ENCODE measurements at regions of chr1 and their contacts with region 1.

Region 1: DNA sequence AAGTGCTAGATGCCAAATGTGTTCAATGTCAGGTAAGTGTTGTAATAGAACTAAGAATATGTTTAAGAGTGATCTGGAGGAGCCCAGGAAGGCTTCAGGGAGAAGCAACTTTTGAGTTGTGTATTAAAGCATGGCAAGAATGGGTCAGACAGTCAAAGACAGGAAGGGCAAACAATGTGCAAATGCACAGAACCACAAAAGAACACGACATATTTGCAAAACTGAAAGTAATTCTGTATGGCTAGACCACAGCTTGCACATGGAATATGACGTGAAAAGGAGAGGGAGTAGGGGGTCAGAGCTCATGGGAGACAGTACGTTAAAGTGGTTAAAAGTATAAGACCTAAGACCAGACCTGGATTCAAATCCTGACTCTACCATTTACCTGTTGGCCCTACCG is 7.1 kb upstream of the SORT1 start:
- DNase-seq: no peak
- H3K27ac ChIP-seq: no peak overlapping the region
- CTCF ChIP-seq: no peak

Region 2: DNA sequence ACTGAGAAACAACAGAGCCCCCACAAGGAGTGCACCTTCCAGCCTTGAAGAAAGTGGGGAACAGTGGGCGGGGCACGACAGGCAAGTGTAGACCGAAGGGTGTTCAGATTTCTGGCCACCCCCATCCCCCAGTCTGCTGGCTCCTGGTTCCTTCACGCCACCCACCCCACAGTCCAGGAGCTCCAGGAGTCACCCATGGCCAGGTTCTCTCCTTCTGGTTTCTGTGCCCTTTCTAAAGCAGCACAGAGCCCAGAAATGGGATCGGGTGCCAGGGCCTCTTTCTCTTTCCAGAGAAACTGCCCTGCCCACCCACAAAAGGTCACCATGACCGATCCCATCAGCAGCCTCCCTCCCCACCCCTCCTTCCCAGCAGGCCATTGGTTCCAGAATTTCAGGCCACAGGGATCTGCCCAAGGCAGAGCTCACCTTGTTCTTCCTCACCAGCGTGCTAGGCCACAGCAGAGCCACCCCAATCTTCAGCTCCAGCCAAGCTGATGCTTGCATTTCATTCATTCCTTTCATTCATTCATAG is 158.7 kb before region 1 on chr1:
- CTCF ChIA-PET with region 1: interaction called, 3 read pairs
- POLR2A ChIA-PET with region 1: interaction called, 10 read pairs
- DNase-seq: no peak
- H3K27ac ChIP-seq: no peak overlapping the region
- CTCF ChIP-seq: no peak

Measured in RWPE1 (cell line).